ENCODE measurements at regions of chr11 and their contacts with region 1.

Region 1: GRCh38 chr11:59135648-59136461 is 6.8 kb upstream of the FAM111A start:
- DNase-seq: peak; percentile 84
- H3K4me3 ChIP-seq: no peak overlapping the region
- H3K27ac ChIP-seq: no peak overlapping the region
- H3K4me1 ChIP-seq: no peaks in the 10 kb centered on the region
- CTCF ChIP-seq: peak; percentile 97

Region 2: DNA sequence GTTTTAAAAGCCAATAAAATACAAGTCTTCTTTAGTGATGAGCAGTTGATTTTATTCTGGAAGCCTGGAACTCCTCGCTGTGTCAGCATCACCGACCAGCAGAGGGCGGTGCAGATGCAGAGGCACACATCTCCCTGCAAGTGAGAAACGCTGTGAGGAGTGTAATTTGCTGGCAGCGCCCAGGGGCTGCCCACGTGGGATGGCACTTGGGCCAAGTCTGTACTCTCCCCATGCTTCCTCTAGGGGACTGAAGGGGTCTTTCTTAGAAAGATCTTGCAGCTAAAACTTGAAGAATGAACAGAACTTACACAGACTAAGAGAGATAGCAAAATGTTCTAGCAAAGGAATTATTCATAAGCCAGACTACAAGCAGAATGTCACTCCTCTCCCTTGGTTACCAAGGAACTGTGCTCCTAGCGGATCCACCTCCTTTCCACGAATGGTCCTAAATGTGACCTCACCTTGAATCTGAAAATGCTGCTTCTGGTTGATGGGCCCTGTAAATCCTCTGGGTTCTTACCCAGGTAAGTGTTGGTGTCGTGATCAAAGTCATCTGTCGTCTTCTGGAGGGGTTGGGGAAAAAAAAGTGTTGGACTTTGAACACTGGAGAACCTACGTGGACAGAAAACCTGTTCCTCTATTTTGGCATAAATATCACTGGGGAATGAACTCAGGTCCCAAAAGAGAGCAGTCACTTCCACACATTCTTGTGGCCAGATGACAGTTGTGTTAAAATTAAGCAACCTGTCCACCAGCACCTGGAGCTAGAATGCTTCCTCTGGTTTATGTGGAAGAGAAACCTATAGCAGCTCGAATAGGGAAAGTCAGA is 481.6 kb before region 1 on chr11:
- CTCF ChIA-PET with region 1: no interaction called
- POLR2A ChIA-PET with region 1: no interaction called
- intact Hi-C with region 1: loop called (anchors 5 kb)
- DNase-seq: peak; percentile 81
- H3K4me3 ChIP-seq: no peak overlapping the region
- H3K27ac ChIP-seq: no peak overlapping the region
- H3K4me1 ChIP-seq: no peaks in the 10 kb centered on the region
- CTCF ChIP-seq: peak; percentile 96

Region 3: GRCh38 chr11:58845366-58845765 is 290.5 kb before region 1 on chr11:
- CTCF ChIA-PET with region 1: no interaction called
- POLR2A ChIA-PET with region 1: no interaction called
- intact Hi-C with region 1: loop called (anchors 1 kb)
- DNase-seq: no peak
- H3K4me3 ChIP-seq: no peak overlapping the region
- H3K27ac ChIP-seq: no peak overlapping the region
- H3K4me1 ChIP-seq: no peaks in the 10 kb centered on the region
- CTCF ChIP-seq: no peak

Region 4: DNA sequence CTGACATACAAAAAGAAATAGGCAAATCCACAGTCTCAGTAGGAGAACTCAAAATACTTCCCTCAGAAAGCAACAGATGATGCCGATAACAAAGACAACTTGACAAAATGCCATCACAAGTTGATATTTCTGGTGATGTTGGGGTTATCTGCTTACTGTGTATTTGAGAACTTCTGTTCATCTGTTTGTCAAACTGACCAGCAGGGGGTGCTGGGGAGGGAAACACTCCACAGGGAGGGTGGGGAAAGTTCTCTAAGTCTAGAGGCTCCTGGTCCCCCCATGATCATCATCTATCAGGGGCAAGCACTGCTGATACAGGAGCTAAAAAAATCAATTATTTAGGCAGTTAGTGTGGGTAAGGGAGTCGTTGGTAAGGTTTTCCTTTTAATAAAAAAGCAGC is 177.4 kb before region 1 on chr11:
- CTCF ChIA-PET with region 1: no interaction called
- POLR2A ChIA-PET with region 1: interaction called, 3 read pairs
- intact Hi-C with region 1: loop called (anchors 1 kb)
- DNase-seq: peak; percentile 63
- H3K4me3 ChIP-seq: no peak overlapping the region
- H3K27ac ChIP-seq: no peak overlapping the region
- H3K4me1 ChIP-seq: no peaks in the 10 kb centered on the region
- CTCF ChIP-seq: peak; percentile 84

Region 5: DNA sequence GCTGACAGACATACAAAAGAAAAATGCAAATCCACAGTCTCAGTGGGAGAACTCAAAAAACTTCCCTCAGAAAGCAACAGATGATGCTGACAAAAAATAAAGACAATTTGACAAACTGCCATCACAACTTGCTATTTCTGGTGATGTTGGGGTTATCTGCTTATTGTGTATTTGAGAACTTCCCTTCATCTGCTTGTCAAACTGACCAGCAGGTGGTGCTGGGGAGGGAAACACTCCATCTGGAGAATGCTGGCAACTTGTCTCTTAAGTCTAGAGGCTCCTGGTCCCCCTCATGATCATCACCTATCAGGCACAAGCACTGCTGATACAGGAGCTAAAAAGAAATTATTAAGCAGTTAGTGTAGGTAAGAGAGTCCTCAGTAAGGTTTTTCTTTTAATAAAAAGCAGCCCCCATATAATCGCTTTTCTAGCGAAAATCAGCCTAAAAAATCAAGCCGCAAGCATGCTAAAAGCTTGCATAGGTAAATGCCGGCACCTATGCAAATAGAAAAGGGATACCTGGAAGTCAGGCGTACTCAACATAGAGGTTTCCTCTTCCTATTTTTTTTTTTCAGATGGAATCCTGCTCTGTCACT is 38.6 kb before region 1 on chr11:
- CTCF ChIA-PET with region 1: no interaction called
- POLR2A ChIA-PET with region 1: interaction called, 8 read pairs
- intact Hi-C with region 1: loop called (anchors 1 kb)
- DNase-seq: peak; percentile 80
- H3K4me3 ChIP-seq: peak overlapping the region; percentile 71
- H3K27ac ChIP-seq: peak overlapping the region; percentile 87
- H3K4me1 ChIP-seq: peaks cover 93% of the 10 kb centered on the region
- CTCF ChIP-seq: peak; percentile 83